ENCODE measurements at regions of chr19 and their contacts with region 1.

Region 1: GRCh38 chr19:6654347-6655310 is 15.3 kb downstream of the TNFSF14 start:
- DNase-seq: peak; percentile 80
- ATAC-seq: peak; percentile 80
- H3K4me3 Mint-ChIP-seq: peak overlapping the region; percentile 71
- H3K27ac Mint-ChIP-seq: peak overlapping the region; percentile 96
- H3K4me1 Mint-ChIP-seq: peaks cover 61% of the 10 kb centered on the region
- H3K27me3 Mint-ChIP-seq: no peaks in the 10 kb centered on the region

Region 2: DNA sequence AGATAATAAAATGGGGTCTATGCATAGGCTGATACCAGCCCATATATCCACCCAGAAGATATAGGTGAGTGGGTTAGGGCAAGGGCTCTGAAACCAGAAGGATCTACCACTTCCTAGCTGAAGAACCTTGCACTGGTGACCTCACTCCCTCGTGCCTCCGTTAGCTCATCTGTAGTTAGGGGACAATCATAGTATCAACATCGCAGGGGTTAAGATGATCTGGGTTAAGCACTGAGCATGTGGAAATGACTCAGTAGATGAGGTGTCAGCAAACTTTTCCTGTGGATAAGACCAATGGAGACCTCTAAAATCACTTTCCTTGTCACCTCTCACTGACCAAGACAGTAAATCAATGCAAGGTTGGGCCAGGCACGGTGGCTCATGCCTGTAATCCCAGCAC is 15.2 kb before region 1 on chr19:
- CTCF ChIA-PET with region 1: interaction called, 7 read pairs
- POLR2A ChIA-PET with region 1: interaction called, 7 read pairs
- intact Hi-C with region 1: loop called in 1 of 2 experiments (anchors 2 kb)
- DNase-seq: peak; percentile 63
- ATAC-seq: peak; percentile 92
- H3K4me3 Mint-ChIP-seq: no peak overlapping the region
- H3K27ac Mint-ChIP-seq: no peak overlapping the region
- H3K4me1 Mint-ChIP-seq: peaks cover 33% of the 10 kb centered on the region
- H3K27me3 Mint-ChIP-seq: no peaks in the 10 kb centered on the region

Region 3: GRCh38 chr19:6694147-6694815 is 39.7 kb after region 1 on chr19:
- CTCF ChIA-PET with region 1: no interaction called
- POLR2A ChIA-PET with region 1: no interaction called
- intact Hi-C with region 1: no loop called
- DNase-seq: peak; percentile 29
- ATAC-seq: peak; percentile 70
- H3K4me3 Mint-ChIP-seq: no peak overlapping the region
- H3K27ac Mint-ChIP-seq: no peak overlapping the region
- H3K4me1 Mint-ChIP-seq: peaks cover 9% of the 10 kb centered on the region
- H3K27me3 Mint-ChIP-seq: no peaks in the 10 kb centered on the region